ENCODE measurements at regions of chr9 and their contacts with region 1.

Region 1: GRCh38 chr9:4117835-4118610 is 181.8 kb downstream of the GLIS3 start:
- DNase-seq: peak; percentile 48 to 61 (median 53)
- ATAC-seq: peak; percentile 91
- H3K4me3 ChIP-seq: no peak overlapping the region
- H3K27ac ChIP-seq: no peak overlapping the region
- H3K4me1 ChIP-seq: peaks cover 0 to 8% of the 10 kb centered on the region in 2 experiments; a peak in 1 of 5 replicates
- H3K27me3 ChIP-seq: no peaks in the 10 kb centered on the region
- CTCF ChIP-seq: peak; percentile 65 to 75 (median 69)
- EP300 ChIP-seq: no peak
- POLR2A ChIP-seq: no peak
- RAD21 ChIP-seq: peak; percentile 46 to 62

Region 2: GRCh38 chr9:4055032-4055431 is 63.0 kb before region 1 on chr9:
- CTCF ChIA-PET with region 1: no interaction called
- POLR2A ChIA-PET with region 1: no interaction called
- in situ Hi-C with region 1: no loop called
- intact Hi-C with region 1: loop called (anchors 10 kb)
- DNase-seq: no peak
- ATAC-seq: no peak
- H3K4me3 ChIP-seq: no peak overlapping the region
- H3K27ac ChIP-seq: no peak overlapping the region
- H3K4me1 ChIP-seq: no peaks in the 10 kb centered on the region
- H3K27me3 ChIP-seq: no peaks in the 10 kb centered on the region
- CTCF ChIP-seq: no peak
- EP300 ChIP-seq: no peak
- POLR2A ChIP-seq: no peak
- RAD21 ChIP-seq: no peak

Region 3: GRCh38 chr9:4131946-4132345 is 13.9 kb after region 1 on chr9:
- CTCF ChIA-PET with region 1: no interaction called
- POLR2A ChIA-PET with region 1: no interaction called
- in situ Hi-C with region 1: no loop called
- intact Hi-C with region 1: no loop called
- DNase-seq: no peak
- ATAC-seq: no peak
- H3K4me3 ChIP-seq: no peak overlapping the region
- H3K27ac ChIP-seq: no peak overlapping the region
- H3K4me1 ChIP-seq: no peaks in the 10 kb centered on the region
- H3K27me3 ChIP-seq: no peaks in the 10 kb centered on the region
- CTCF ChIP-seq: no peak
- EP300 ChIP-seq: no peak
- POLR2A ChIP-seq: no peak
- RAD21 ChIP-seq: no peak